Dendritic cell treated with granulocyte-macrophage colony-stimulating factor and Interleukin-4, amounts not matched to agents 40 ng/mL and 50 ng/mL, for 4 days (primary cell): ENCODE measurements at regions of chrX and their contacts with region 1.

Region 1: DNA sequence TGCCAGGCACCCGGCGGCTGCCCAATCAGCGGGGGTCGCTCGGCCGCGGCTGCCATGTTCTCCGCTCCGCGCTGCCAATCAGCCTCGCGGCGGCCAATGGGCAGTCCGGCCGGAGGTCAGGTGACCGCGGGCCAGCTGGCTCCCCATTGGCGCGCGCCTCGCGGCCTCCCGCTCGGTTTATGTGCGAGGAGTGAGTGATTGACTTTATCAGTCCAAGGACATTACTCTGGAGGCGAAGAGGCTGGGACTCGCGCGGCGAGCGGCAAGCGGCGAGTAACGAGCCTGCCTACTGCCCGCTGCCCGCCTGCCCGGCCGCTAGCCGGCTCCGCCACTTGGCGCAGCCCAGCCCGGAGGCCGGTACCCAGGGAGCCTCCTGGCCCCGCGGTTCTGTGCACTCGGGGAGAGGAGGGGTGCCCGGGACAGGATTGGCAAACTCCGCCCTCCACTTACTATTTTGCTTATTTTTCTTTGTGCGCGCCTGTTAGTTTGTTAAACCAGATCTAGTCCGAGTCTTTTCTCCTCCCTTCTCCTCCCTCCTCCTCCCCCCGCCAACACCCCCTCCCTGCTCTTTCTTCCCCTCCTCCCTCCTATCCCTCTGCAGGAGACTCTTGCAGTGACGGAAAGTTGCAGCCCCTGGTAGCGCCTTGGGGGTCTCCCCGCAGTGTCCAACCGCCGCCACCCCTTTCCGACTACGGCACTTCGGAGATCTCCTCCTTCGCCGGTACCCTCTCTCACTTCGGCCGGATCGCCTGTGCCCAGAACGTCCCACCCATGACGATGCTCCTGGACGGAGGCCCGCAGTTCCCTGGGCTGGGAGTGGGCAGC is at the start of gene ZIC3:
- H3K4me3 Mint-ChIP-seq: peak within 1 kb of the TSS; percentile 67
- H3K27ac Mint-ChIP-seq: no peak within 1 kb of the TSS
- H3K4me1 Mint-ChIP-seq: peaks cover 22% of the 10 kb centered on the region
- H3K27me3 Mint-ChIP-seq: peaks cover 89% of the 10 kb centered on the region

Region 2: GRCh38 chrX:137263374-137263773 is 302.8 kb before region 1 on chrX:
- intact Hi-C with region 1: no loop called
- H3K4me3 Mint-ChIP-seq: no peak overlapping the region
- H3K27ac Mint-ChIP-seq: no peak overlapping the region
- H3K4me1 Mint-ChIP-seq: no peaks in the 10 kb centered on the region
- H3K27me3 Mint-ChIP-seq: no peaks in the 10 kb centered on the region

Region 3: GRCh38 chrX:137427806-137428205 is 138.3 kb before region 1 on chrX:
- intact Hi-C with region 1: loop called (anchors 10 kb)
- H3K4me3 Mint-ChIP-seq: peak overlapping the region; percentile 76
- H3K27ac Mint-ChIP-seq: no peak overlapping the region
- H3K4me1 Mint-ChIP-seq: peaks cover 12% of the 10 kb centered on the region
- H3K27me3 Mint-ChIP-seq: peaks cover 80% of the 10 kb centered on the region

Region 4: GRCh38 chrX:137479386-137479785 is 86.7 kb before region 1 on chrX:
- intact Hi-C with region 1: no loop called
- H3K4me3 Mint-ChIP-seq: no peak overlapping the region
- H3K27ac Mint-ChIP-seq: no peak overlapping the region
- H3K4me1 Mint-ChIP-seq: no peaks in the 10 kb centered on the region
- H3K27me3 Mint-ChIP-seq: peaks cover 1% of the 10 kb centered on the region